Activated CD4-positive, alpha-beta T cell treated with anti-CD3 and anti-CD28 coated beads, Interleukin-2, amount 10 ng/mL, durations not matched to agents 24 days and 14 days (primary cell): ENCODE measurements at regions of chr3 and their contacts with region 1.

Region 1: GRCh38 chr3:128804017-128804810 is 75.2 kb upstream of the ACAD9 start:
- DNase-seq: peak; percentile 93
- H3K4me3 Mint-ChIP-seq: peak overlapping the region; percentile 70
- H3K27ac Mint-ChIP-seq: peak overlapping the region; percentile 98
- H3K4me1 Mint-ChIP-seq: peaks cover 78% of the 10 kb centered on the region
- H3K27me3 Mint-ChIP-seq: no peaks in the 10 kb centered on the region

Region 2: DNA sequence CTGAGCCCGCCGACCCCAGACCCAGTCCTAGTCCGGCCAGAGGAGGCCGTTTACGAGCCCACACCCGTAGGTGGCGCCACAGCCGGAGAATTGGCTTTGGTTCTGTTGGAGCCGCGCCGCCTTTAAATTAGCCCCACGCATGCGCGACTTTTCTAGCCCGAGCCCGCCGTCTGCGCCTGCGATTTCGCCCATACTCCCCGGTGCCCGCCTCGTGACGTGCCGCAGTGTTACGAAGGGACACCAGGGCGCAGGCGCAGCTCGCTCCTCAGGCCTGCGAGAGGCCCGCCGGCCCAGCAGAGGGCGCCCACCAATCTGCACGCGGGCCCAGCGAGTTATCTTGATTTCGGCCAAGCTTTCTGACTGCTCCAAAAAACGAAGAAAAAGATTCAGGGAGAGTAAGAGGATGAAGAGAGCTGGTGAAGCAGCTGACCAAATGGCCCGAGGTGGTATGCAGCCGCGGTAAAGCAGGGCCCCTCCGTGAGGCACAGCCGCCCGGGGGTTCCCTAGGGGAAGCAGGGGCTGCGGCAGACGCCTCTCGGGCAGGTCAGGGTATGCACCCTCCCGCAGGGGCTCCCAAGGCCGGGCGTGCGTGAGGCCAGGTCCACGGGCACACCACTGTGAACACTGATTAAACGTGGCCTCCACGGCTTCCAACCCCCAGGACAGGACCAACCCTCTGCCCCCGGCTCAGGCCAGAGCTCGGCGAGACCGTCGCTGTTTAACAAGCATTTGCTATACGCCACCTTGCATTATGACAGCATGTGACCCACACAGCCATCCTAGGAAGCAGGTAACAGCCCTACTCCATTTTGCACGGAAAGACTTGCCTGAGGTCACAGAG is 186.4 kb before region 1 on chr3:
- intact Hi-C with region 1: loop called (anchors 2 kb)
- DNase-seq: peak; percentile 100
- H3K4me3 Mint-ChIP-seq: peak overlapping the region; percentile 95
- H3K27ac Mint-ChIP-seq: peak overlapping the region; percentile 96
- H3K4me1 Mint-ChIP-seq: peaks cover 34% of the 10 kb centered on the region
- H3K27me3 Mint-ChIP-seq: no peaks in the 10 kb centered on the region

Region 3: GRCh38 chr3:128725932-128726690 is 78.1 kb before region 1 on chr3 and contains the start of gene RAB7A:
- intact Hi-C with region 1: loop called (anchors 1 kb)
- DNase-seq: peak; percentile 99
- H3K4me3 Mint-ChIP-seq: peak within 1 kb of the TSS; percentile 92
- H3K27ac Mint-ChIP-seq: peak within 1 kb of the TSS; percentile 94
- H3K4me1 Mint-ChIP-seq: peaks cover 42% of the 10 kb centered on the region
- H3K27me3 Mint-ChIP-seq: peaks cover 4% of the 10 kb centered on the region
- total RNA-seq, gene RAB7A: 338 and 361 TPM in 2 replicates

Region 4: GRCh38 chr3:128736601-128737000 is 67.6 kb before region 1 on chr3:
- intact Hi-C with region 1: no loop called
- DNase-seq: no peak
- H3K4me3 Mint-ChIP-seq: no peak overlapping the region
- H3K27ac Mint-ChIP-seq: no peak overlapping the region
- H3K4me1 Mint-ChIP-seq: peaks cover 38% of the 10 kb centered on the region
- H3K27me3 Mint-ChIP-seq: no peaks in the 10 kb centered on the region

Region 5: GRCh38 chr3:128787256-128788240 is 16.7 kb before region 1 on chr3:
- intact Hi-C with region 1: loop called (anchors 1 kb)
- DNase-seq: peak; percentile 79
- H3K4me3 Mint-ChIP-seq: peak overlapping the region; percentile 89
- H3K27ac Mint-ChIP-seq: peak overlapping the region; percentile 100
- H3K4me1 Mint-ChIP-seq: peaks cover 76% of the 10 kb centered on the region
- H3K27me3 Mint-ChIP-seq: no peaks in the 10 kb centered on the region

Region 6: GRCh38 chr3:128845778-128846485 is 41.7 kb after region 1 on chr3:
- intact Hi-C with region 1: loop called (anchors 1 kb)
- DNase-seq: peak; percentile 94
- H3K4me3 Mint-ChIP-seq: peak overlapping the region; percentile 69
- H3K27ac Mint-ChIP-seq: peak overlapping the region; percentile 88
- H3K4me1 Mint-ChIP-seq: peaks cover 18% of the 10 kb centered on the region
- H3K27me3 Mint-ChIP-seq: no peaks in the 10 kb centered on the region

Region 7: GRCh38 chr3:129316131-129317013 is 512.2 kb after region 1 on chr3:
- intact Hi-C with region 1: loop called (anchors 10 kb)
- DNase-seq: peak; percentile 98
- H3K4me3 Mint-ChIP-seq: peak overlapping the region; percentile 92
- H3K27ac Mint-ChIP-seq: peak overlapping the region; percentile 74
- H3K4me1 Mint-ChIP-seq: peaks cover 27% of the 10 kb centered on the region
- H3K27me3 Mint-ChIP-seq: no peaks in the 10 kb centered on the region